Heart right ventricle (tissue), 16 donors: ENCODE measurements at regions of chr4 and their contacts with region 1.

Region 1: GRCh38 chr4:105352826-105353225 is 121.0 kb downstream of the PPA2 start:
- DNase-seq: no peak
- ATAC-seq: peak in 1 of 8 donors; percentile 18
- H3K4me3 ChIP-seq: no peak overlapping the region
- H3K27ac ChIP-seq: no peak overlapping the region
- H3K4me1 ChIP-seq: peaks cover 0 to 39% (median 12%) of the 10 kb centered on the region in 9 donors
- H3K27me3 ChIP-seq: no peaks in the 10 kb centered on the region
- CTCF ChIP-seq: no peak

Region 2: DNA sequence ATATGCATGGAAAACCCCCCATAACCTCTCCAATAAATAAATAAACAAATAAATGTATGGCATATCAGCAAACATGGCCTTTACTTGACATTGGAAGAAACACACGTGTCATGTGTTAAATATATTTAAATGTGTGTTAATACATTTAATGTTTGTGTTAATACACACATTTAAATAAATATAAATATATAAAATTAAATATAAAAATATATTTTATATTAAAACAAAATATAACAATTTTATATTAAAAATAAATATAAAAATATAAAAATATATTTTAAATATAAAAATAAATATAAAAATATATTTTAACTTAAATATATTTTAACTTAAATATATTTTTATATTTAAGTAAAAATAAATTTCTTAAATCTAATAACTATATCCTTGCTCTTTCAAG is 670.5 kb before region 1 on chr4:
- intact Hi-C with region 1: no loop called
- DNase-seq: no peak
- ATAC-seq: no peak
- H3K4me3 ChIP-seq: no peak overlapping the region
- H3K27ac ChIP-seq: no peak overlapping the region
- H3K4me1 ChIP-seq: no peaks in the 10 kb centered on the region
- H3K27me3 ChIP-seq: no peaks in the 10 kb centered on the region
- CTCF ChIP-seq: no peak

Region 3: GRCh38 chr4:104941661-104942062 is 411.2 kb before region 1 on chr4:
- intact Hi-C with region 1: no loop called
- DNase-seq: no peak
- ATAC-seq: no peak
- H3K4me3 ChIP-seq: no peak overlapping the region
- H3K27ac ChIP-seq: no peak overlapping the region
- H3K4me1 ChIP-seq: no peaks in the 10 kb centered on the region
- H3K27me3 ChIP-seq: no peaks in the 10 kb centered on the region
- CTCF ChIP-seq: no peak

Region 4: DNA sequence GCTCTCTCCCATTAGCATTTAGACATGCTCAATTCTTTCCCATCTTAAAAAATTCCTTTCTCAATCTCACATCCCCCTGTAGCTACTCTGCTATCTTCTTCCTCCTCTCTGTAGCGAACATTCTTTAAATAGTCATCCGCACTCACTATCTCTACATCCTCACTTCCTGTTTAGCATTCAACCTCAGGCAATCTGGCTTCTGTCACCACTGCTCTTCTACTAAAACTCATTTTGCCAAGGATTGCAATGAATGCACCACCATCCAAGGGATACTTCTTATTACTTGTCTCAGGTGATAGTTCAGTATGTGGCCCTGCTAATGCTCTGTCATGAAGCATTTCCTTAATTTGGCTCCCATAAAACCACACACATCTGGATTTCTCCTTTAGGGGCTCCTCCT is 217.0 kb before region 1 on chr4:
- intact Hi-C with region 1: loop called in 1 of 10 experiments (anchors 10 kb)
- DNase-seq: no peak
- ATAC-seq: no peak
- H3K4me3 ChIP-seq: no peak overlapping the region
- H3K27ac ChIP-seq: no peak overlapping the region
- H3K4me1 ChIP-seq: peaks cover 0 to 27% (median 0%) of the 10 kb centered on the region in 9 donors
- H3K27me3 ChIP-seq: no peaks in the 10 kb centered on the region
- CTCF ChIP-seq: no peak